ENCODE measurements at regions of chr11 and their contacts with region 1.

Region 1: DNA sequence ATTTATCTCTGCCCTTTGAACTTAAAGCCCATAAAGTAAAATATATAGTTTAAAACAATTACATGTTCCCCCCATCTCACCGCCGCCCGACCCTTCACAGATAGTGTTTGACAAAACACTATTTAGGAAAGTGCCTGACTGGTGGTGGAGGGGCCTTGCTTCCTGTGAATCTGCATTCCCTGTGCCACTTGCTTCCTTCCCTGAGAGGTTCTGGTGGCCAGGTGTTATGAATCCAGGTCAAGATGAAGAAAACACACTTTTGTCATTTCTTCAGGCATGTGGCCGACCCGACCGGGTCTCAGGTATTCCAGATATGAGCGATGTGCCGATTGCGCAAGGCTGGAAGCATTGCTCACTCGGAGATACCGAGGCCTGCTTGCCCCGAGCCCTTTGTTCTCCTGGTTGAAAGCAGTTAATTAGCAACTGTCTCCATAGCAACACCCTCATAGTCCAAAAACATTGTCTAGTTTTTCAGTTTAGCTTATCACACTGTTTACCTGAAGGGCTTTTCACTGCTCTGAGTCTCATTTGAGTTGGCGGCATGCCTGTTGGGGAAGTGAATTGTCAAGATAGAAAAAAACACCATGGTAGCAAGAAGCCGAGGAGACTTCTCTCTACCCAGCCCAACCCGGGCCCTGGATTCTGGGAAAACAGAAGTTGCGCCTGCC is 128.3 kb downstream of the TEAD1 start:
- DNase-seq: peak; percentile 82 to 88 (median 88)
- ATAC-seq: peak; percentile 90
- H3K4me3 ChIP-seq: no peak overlapping the region
- H3K4me1 ChIP-seq: peaks cover 35% of the 10 kb centered on the region
- CTCF ChIP-seq: no peak

Region 2: DNA sequence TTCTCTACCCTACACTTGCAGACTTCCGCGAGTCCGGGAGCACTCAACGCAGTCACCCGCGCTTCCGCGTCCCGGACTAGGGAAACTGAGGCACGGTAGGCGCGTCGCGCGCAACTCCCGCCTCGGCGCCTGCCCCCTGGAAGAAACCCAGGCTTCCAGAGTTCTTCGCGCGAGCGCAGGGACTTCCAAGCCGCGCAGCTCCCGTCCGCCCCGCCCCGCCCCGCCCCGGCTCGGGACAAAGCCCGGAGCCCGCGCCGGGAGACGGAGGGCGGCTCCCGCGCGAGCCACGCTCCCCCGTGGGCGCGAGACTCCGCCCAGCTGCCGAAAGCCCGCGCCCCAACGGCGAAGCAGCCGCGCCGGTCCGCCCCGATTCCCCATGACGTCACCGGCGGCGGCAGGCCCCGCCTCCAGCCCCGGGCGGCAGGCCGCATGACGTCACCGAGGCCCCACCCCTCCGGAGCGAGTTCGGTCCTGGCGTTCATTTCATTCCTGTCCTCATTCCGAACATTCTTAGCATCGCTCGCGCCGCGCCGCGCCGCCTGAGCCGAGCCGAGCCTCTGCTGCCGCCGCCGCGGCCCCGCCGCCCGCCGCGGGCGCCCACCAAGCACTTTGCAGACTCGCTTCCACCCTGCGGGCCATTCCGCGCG is 128.5 kb before region 1 on chr11 and contains the start of gene TEAD1:
- intact Hi-C with region 1: loop called in 1 of 2 experiments (anchors 10 kb)
- DNase-seq: peak; percentile 93 to 99 (median 96)
- ATAC-seq: peak; percentile 93
- H3K4me3 ChIP-seq: peak within 1 kb of the TSS; percentile 69
- H3K4me1 ChIP-seq: peaks cover 12% of the 10 kb centered on the region
- CTCF ChIP-seq: no peak
- total RNA-seq, gene TEAD1: 33.2 to 196 (median 41.1) TPM